Right ventricle myocardium inferior (tissue), 1 donor: ENCODE measurements at regions of chr2 and their contacts with region 1.

Region 1: DNA sequence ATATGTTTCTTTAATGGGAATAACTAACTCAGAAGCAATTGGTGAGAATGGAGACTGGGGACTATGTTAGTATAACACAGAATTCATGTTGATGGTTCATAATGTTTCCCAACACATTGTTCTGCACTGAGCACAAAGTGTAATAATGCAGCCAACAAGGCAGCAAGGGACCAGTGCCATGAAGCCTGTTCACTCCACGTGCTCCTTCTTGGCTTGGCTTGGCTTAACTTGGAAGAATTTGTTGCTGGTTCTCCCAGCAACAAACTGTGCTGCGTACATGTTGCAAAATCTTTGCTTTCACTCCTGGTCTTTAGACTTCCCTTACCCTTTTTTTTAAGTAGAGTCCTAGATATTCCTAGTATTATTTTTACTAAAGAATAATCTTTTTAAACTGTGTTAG is 129.7 kb downstream of the MAP3K20 start:
- DNase-seq: no peak
- ATAC-seq: peak; percentile 97

Region 2: GRCh38 chr2:172012677-172013391 is 1192.5 kb before region 1 on chr2:
- intact Hi-C with region 1: no loop called
- DNase-seq: no peak
- ATAC-seq: no peak

Region 3: DNA sequence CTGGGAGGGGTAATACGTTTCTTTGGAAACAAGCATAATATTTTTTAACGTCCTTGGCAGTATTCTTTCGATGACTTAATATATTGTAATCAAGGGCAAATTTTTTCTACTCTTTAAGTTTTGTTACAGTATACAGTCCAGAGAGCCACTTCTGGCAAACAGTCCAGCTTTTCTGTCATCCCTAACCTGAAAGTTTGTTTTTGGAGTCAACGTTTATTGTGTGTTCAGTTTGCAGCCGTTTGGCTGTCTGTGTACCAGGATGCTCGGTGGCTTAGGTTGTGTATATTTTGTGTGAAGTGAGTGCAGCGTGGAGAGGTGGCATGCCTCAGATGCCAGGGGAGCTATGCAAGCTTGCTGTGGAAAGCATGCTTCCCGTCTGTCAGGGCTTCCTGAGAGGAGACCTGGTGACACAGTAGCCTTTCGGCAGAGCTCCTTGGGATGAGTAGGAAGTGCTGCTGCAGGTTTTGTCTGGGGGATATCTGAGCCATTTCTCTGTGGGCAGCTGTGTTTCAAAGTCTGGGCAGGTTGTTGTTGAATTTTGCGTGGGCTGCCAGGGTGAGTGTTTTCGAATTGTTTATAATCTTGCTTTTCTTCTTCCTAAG is 115.0 kb before region 1 on chr2:
- intact Hi-C with region 1: loop called (anchors 5 kb)
- DNase-seq: no peak
- ATAC-seq: peak; percentile 82

Region 4: GRCh38 chr2:173218326-173219056 is 13.1 kb after region 1 on chr2:
- intact Hi-C with region 1: no loop called
- DNase-seq: no peak
- ATAC-seq: peak; percentile 81

Region 5: DNA sequence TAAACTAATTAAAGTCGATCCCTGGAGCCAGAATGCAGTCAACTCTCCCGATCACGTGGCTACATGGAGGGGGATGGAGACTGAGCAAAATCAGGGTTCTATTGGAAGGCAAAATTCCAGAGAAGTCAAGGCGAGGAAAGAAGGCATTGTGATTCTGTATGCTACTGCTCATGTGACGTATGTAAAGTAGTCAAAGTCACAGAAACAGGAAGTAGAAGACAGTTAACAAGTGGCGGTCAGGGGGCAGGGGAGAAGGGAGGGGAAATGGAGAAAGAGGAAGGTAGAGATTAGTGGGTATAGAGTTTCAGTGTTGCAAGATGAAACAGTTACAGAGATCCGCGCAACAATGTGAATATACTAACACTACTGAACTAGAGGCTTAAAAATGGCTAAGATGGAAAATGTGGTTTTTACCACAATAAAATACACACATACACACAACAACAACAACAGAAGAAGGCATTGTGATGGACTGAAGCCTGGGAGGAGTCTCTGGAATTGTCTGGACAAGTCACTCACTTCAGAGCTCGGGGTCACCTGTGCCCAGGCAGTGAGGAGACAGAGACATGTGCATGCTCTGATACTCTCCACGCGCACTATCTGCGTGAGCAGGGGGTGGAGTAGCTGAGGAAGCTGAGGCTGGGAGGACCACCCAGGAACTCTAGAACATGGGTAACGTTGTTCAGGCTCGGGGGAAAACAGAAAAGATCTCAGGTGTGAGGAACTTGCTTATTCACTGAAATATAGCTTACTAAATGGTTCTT is 59.4 kb after region 1 on chr2:
- intact Hi-C with region 1: no loop called
- DNase-seq: no peak
- ATAC-seq: peak; percentile 60

Region 6: DNA sequence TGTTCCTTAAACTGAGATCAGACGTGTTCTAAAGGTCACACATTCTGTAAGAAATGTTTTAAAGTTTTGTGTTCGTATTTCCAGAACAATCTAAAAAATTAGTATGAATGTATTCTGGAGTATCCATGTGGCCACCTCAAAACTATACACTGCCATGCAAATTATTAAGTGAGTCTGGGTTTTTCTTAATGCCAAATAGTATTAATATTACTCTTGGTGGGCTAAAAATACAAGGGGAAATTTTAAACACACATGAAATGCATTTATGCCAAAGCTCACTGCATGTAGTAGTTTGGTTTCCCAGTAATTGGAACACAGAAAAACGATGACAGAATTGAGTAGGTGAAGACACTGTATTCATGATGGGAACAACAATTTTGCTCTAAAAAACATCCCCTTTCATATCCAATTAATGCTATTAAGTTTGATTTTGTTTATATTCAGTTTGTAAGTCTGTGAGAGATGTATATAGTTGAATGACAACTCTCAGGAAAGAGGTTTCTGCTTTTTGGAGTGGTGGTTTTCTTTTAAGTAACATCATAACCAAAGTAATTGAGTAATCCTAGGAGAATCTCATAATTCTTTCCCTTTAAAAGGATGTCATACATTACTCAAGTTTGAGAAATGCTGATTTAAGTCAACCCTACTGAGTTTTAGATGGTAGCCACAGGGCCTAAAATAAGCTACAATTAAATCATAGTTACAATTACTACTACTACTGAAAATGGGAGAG is 73.6 kb after region 1 on chr2:
- intact Hi-C with region 1: no loop called
- DNase-seq: no peak
- ATAC-seq: no peak